AG04449 (cell line): ENCODE measurements at regions of chr12 and their contacts with region 1.

Region 1: GRCh38 chr12:104057771-104058197 is 6.5 kb upstream of the HCFC2 start:
- DNase-seq: no peak
- H3K4me3 ChIP-seq: no peak overlapping the region
- CTCF ChIP-seq: peak; percentile 55

Region 2: DNA sequence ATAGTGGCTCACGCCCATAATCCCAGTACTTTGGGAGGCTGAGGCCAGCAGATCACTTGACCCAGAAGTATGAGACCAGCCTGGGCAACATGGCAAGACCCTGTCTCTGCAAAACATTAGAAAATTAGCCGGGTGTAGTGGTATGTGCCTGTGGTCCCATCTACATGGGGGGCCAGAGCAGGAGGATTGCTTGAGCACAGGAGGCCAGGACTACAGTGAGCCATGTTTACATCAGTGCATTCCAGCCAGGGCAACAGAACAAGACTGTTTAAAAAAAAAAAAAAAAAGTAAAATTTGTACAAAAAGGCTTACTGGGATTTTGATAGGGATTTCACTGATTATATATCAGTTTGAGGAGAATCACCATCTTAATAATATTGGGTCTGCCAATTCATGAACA is 14.3 kb after region 1 on chr12:
- CTCF ChIA-PET with region 1: interaction called, 21 read pairs
- POLR2A ChIA-PET with region 1: no interaction called
- DNase-seq: no peak
- H3K4me3 ChIP-seq: no peak overlapping the region
- CTCF ChIP-seq: no peak